ENCODE measurements at regions of chr9 and their contacts with region 1.

Region 1: DNA sequence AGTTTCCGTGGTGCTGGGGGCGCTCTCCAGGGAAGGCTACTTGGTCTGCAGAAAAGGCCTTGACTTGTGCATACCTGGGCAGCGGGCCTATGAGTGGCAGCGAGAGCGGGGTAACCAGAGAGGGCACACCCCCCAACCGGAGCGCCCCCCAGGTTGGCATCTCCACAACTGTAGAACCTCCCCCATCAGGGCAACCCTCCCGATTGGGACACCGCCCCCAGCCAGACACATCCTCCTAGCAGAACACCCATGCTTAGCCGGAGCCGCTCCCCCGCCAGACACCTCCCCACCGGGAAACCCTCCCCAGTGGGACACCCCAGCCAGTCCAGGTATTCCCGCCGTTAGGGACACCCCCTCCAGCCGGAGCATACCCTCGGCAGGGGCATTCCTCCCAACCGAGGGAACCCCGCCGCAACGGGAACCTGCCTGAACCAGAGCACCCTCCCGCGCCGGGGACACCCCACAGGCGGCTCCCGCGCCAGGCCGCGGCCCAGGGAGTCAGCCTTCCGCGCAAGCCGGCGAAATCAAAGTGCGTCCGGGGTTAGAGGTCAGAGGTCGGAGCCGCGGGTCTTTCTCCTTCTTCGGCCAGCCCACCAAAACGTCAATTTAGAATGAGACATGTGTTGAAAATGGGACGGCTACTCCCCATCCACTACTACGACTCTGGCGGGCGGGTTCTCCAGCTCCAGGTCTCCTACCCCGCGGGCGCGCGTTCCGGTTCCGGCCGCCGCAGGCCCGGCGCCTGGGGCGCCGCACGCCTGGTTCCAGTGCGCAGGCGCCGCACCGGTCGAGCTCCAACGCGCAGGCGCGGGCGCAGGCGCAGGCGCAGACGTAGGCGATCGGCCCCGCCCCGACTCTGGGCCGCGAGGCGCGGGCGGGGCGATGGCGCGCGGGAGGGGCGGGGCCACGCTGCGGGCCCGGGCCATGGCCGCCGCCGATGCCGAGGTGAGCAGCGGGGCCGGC is at the start of gene EHMT1:
- DNase-seq: peak; percentile 83
- H3K4me3 ChIP-seq: peak within 1 kb of the TSS; percentile 72 to 82 (median 73)
- H3K27ac ChIP-seq: peak within 1 kb of the TSS; percentile 58
- H3K4me1 ChIP-seq: peaks cover 22% of the 10 kb centered on the region
- H3K27me3 ChIP-seq: no peaks in the 10 kb centered on the region
- CTCF ChIP-seq: no peak
- POLR2A ChIP-seq: peak; percentile 88
- total RNA-seq, gene EHMT1: 103 and 104 TPM in 2 replicates

Region 2: DNA sequence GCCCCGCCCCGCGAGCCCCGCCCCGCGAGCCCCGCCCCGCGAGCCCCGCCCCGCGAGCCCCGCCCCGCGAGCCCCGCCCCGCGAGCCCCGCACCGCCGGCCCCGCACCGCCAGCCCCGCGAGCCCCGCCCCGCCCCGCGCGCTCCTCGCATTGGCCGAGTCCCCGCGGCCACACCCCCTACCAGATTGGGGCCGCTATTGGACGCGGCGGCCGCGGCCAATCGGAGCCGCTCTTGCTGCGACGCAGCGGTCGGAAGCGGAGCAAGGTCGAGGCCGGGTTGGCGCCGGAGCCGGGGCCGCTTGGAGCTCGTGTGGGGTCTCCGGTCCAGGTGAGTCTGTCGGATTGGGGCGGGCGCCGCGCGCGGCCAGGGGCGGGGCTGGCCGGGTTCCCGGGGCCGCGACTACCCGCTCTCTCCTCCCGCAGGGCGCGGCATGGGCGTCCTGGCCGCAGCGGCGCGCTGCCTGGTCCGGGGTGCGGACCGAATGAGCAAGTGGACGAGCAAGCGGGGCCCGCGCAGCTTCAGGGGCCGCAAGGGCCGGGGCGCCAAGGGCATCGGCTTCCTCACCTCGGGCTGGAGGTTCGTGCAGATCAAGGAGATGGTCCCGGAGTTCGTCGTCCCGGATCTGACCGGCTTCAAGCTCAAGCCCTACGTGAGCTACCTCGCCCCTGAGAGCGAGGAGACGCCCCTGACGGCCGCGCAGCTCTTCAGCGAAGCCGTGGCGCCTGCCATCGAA is 66.6 kb before region 1 on chr9 and contains the start of gene MRPL41:
- CTCF ChIA-PET with region 1: no interaction called
- POLR2A ChIA-PET with region 1: no interaction called
- dilution Hi-C with region 1: no loop called
- intact Hi-C with region 1: loop called (anchors 2 kb)
- DNase-seq: peak; percentile 82
- H3K4me3 ChIP-seq: peak within 1 kb of the TSS; percentile 61 to 67 (median 62)
- H3K27ac ChIP-seq: peak within 1 kb of the TSS; percentile 49
- H3K4me1 ChIP-seq: peaks cover 9% of the 10 kb centered on the region
- H3K27me3 ChIP-seq: no peaks in the 10 kb centered on the region
- CTCF ChIP-seq: no peak
- POLR2A ChIP-seq: peak; percentile 81
- total RNA-seq, gene MRPL41: 50.7 and 53.3 TPM in 2 replicates

Measured in endothelial cell of umbilical vein (primary cell).